Activated T-helper 2 cell treated with anti-CD3 and anti-CD28 coated beads, Interferon-gamma antibody, Interleukin-2, Interleukin-4, amounts not matched to agents 10 μg/mL and 5 μg/mL and 100 μg/mL, durations not matched to agents 14 hours and 24 hours and 36 hours (primary cell): ENCODE measurements at regions of chr4 and their contacts with region 1.

Region 1: DNA sequence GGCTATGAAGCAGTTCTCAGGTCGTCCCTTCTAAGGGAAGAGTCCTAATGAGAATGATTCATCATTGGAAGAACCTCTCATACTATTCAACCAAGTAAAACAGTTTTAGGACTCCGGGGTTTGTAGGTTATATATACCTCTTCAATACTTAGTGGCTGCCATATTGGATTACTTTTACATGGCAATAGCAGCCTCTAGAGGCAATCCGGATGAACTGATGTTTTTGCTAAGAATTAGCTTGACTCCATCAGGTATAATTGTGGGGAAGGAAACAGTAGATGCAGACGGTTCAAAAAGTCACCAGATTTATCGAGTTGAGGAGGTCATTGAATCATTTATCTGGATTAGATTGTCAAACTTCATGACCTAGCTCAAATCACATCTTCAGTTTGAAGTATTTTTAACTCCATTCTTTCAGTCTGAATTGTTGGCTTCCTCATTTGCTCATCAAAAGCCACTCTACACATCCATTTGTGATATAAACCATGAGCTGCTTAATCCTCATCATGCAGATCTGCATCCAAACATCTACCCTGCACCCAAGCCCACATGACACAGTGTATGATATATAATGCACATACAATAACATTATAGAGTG is 28.4 kb downstream of the GUCY1B1 start:
- DNase-seq: no peak
- H3K4me3 Mint-ChIP-seq: no peak overlapping the region
- H3K27ac Mint-ChIP-seq: no peak overlapping the region
- H3K4me1 Mint-ChIP-seq: peaks cover 4% of the 10 kb centered on the region
- H3K27me3 Mint-ChIP-seq: no peaks in the 10 kb centered on the region

Region 2: GRCh38 chr4:155442267-155443105 is 344.7 kb before region 1 on chr4:
- intact Hi-C with region 1: loop called (anchors 1 kb)
- DNase-seq: peak; percentile 19
- H3K4me3 Mint-ChIP-seq: no peak overlapping the region
- H3K27ac Mint-ChIP-seq: no peak overlapping the region
- H3K4me1 Mint-ChIP-seq: peaks cover 7% of the 10 kb centered on the region
- H3K27me3 Mint-ChIP-seq: peaks cover 25% of the 10 kb centered on the region

Region 3: GRCh38 chr4:155529272-155529671 is 257.9 kb before region 1 on chr4:
- intact Hi-C with region 1: loop called (anchors 1 kb)
- DNase-seq: no peak
- H3K4me3 Mint-ChIP-seq: no peak overlapping the region
- H3K27ac Mint-ChIP-seq: no peak overlapping the region
- H3K4me1 Mint-ChIP-seq: peaks cover 2% of the 10 kb centered on the region
- H3K27me3 Mint-ChIP-seq: no peaks in the 10 kb centered on the region

Region 4: GRCh38 chr4:155822572-155822971 is 35.4 kb after region 1 on chr4:
- intact Hi-C with region 1: no loop called
- DNase-seq: no peak
- H3K4me3 Mint-ChIP-seq: no peak overlapping the region
- H3K27ac Mint-ChIP-seq: no peak overlapping the region
- H3K4me1 Mint-ChIP-seq: no peaks in the 10 kb centered on the region
- H3K27me3 Mint-ChIP-seq: no peaks in the 10 kb centered on the region